Sigmoid colon (tissue), 7 donors: ENCODE measurements at regions of chr9 and their contacts with region 1.

Region 1: DNA sequence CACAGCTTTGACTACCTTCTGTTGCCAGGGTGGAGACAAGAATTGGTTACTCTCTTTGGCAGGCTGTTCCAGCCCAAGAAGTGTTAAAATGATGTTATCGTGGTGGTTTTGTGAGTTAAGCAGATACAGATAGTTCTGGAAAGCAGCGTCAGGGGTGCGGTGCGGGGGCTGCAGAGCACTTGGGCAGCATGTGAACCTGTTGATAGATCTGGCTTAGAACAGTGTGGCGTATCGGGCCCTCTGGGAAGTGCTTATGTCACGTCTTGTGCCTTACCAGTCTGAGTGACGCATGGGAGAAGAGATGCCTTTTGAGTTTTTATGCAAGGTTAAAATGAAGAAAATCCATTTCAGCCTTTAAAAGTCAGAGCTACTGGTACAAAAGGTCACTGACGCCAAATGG is 152.5 kb downstream of the PRKACG start:
- DNase-seq: no peak
- H3K4me3 ChIP-seq: no peak overlapping the region
- H3K27ac ChIP-seq: no peak overlapping the region
- H3K4me1 ChIP-seq: no peaks in the 10 kb centered on the region
- H3K27me3 ChIP-seq: no peaks in the 10 kb centered on the region
- CTCF ChIP-seq: no peak
- EP300 ChIP-seq: peak in 1 of 4 donors; percentile 14
- POLR2A ChIP-seq: no peak

Region 2: GRCh38 chr9:68817079-68817875 is 44.2 kb before region 1 on chr9:
- intact Hi-C with region 1: loop called (anchors 5 kb)
- DNase-seq: no peak
- H3K4me3 ChIP-seq: no peak overlapping the region
- H3K27ac ChIP-seq: no peak overlapping the region
- H3K4me1 ChIP-seq: peaks cover 0 to 4% (median 0%) of the 10 kb centered on the region in 4 donors
- H3K27me3 ChIP-seq: no peaks in the 10 kb centered on the region
- CTCF ChIP-seq: no peak
- EP300 ChIP-seq: no peak
- POLR2A ChIP-seq: no peak

Region 3: GRCh38 chr9:69131682-69132081 is 270.2 kb after region 1 on chr9:
- intact Hi-C with region 1: no loop called
- DNase-seq: peak; percentile 71
- H3K4me3 ChIP-seq: no peak overlapping the region
- H3K27ac ChIP-seq: no peak overlapping the region
- H3K4me1 ChIP-seq: peaks cover 0 to 7% (median 0%) of the 10 kb centered on the region in 4 donors
- H3K27me3 ChIP-seq: no peaks in the 10 kb centered on the region
- CTCF ChIP-seq: no peak
- EP300 ChIP-seq: no peak
- POLR2A ChIP-seq: no peak